Caco-2 (cell line): ENCODE measurements at regions of chr6 and their contacts with region 1.

Region 1: DNA sequence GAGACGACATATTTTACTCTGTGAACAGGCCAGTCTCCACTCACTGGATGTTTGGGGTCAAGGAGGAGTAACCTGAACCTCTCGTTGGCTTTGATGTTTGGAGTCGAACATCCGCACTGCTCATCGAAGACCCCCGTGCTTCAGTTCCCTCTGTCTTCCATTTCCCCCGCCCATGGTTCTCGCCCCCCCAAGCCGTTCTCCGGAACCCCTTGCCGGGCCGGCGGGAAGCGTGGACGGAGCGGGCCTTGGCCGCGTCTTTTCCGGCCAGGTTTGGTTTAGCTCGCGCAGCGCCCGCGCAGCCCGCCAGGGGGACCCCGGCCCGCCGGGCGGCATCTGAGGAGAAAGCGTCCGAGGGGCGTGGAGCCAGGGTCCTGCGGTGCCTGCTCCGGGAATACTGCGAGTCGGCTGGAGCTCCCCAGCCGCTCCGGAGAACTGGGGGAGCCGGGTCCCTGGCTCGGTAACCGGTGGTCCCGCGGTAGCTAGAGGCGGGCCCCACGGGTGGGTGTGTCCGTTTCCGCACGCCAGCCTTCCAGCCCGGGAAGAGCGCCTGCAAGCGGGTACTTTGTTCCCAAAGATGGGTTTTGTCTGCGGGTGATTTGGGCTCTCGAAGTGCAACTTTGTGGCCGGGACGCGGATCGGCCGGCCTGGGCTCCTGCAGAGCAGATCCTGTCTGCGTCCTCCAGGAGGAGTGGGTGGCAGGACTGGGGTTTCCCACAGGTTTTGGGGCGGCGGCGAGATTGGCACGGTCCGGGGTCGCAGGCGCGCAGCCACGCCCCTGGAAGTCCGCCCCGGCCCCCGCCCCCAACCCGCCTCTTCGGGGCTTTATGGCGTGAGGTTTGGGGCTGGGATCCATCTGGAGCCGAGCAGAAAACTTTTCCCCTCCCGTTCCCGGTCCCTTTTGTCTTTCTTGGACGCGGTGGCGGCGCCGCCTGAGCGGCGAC is at the start of gene TMEM200A:
- DNase-seq: peak; percentile 69 to 88
- H3K4me3 ChIP-seq: peak within 1 kb of the TSS; percentile 71
- H3K4me3 Mint-ChIP-seq: peak within 1 kb of the TSS; percentile 91
- H3K27ac Mint-ChIP-seq: peak within 1 kb of the TSS; percentile 20
- H3K4me1 ChIP-seq: peaks cover 16% of the 10 kb centered on the region
- H3K4me1 Mint-ChIP-seq: peaks cover 36% of the 10 kb centered on the region
- H3K27me3 ChIP-seq: no peaks in the 10 kb centered on the region
- H3K27me3 Mint-ChIP-seq: no peaks in the 10 kb centered on the region
- CTCF ChIP-seq: peak; percentile 76 to 92
- total RNA-seq, gene TMEM200A: 15.6 and 16.3 TPM in 2 replicates

Region 2: GRCh38 chr6:130293800-130294199 is 71.6 kb before region 1 on chr6:
- CTCF ChIA-PET with region 1: interaction called, 3 read pairs
- POLR2A ChIA-PET with region 1: no interaction called
- intact Hi-C with region 1: loop called (anchors 5 kb)
- DNase-seq: peak; percentile 73 to 74
- H3K4me3 ChIP-seq: no peak overlapping the region
- H3K4me3 Mint-ChIP-seq: no peak overlapping the region
- H3K27ac Mint-ChIP-seq: peak overlapping the region; percentile 49
- H3K4me1 ChIP-seq: peaks cover 4% of the 10 kb centered on the region; the same call in 1 of the 2 replicates
- H3K4me1 Mint-ChIP-seq: peaks cover 6% of the 10 kb centered on the region
- H3K27me3 ChIP-seq: no peaks in the 10 kb centered on the region
- H3K27me3 Mint-ChIP-seq: no peaks in the 10 kb centered on the region
- CTCF ChIP-seq: peak; percentile 60 to 75

Region 3: DNA sequence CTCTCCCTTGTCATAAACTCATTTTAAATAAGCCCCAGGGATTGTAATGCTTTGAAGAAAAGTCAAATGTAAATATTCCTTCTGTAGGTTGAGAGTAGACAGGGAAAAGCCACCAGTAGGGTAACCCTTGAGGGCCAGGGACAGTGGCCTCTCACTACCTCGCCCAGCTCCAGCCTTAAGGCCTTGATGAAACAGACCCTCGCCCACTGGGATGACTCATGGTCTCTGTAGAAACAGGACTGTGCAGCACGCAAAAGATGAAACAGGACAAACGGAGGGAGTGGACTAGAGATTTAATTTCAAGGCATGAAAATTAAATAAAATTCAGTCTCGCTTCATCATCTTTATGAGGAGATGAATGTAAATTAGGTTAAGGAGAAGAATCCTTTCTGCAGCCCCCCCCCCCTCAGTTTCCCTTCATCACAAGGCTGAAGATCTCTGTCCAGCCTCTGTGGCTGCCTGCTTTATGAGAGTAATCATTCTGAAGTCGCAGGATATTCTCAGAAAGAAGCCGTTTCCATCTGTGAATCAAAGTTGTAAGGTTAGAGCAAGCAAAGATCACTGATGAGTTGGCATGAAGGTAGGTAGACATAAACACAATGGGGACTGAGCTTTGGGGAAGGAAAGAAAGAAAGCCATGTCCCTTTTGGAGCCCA is 60.8 kb after region 1 on chr6:
- CTCF ChIA-PET with region 1: interaction called, 3 read pairs
- POLR2A ChIA-PET with region 1: no interaction called
- intact Hi-C with region 1: loop called (anchors 5 kb)
- DNase-seq: peak; percentile 36 to 43
- H3K4me3 ChIP-seq: no peak overlapping the region
- H3K4me3 Mint-ChIP-seq: no peak overlapping the region
- H3K27ac Mint-ChIP-seq: no peak overlapping the region
- H3K4me1 ChIP-seq: peaks cover 3% of the 10 kb centered on the region
- H3K4me1 Mint-ChIP-seq: peaks cover 22% of the 10 kb centered on the region
- H3K27me3 ChIP-seq: no peaks in the 10 kb centered on the region
- H3K27me3 Mint-ChIP-seq: no peaks in the 10 kb centered on the region
- CTCF ChIP-seq: no peak

Region 4: DNA sequence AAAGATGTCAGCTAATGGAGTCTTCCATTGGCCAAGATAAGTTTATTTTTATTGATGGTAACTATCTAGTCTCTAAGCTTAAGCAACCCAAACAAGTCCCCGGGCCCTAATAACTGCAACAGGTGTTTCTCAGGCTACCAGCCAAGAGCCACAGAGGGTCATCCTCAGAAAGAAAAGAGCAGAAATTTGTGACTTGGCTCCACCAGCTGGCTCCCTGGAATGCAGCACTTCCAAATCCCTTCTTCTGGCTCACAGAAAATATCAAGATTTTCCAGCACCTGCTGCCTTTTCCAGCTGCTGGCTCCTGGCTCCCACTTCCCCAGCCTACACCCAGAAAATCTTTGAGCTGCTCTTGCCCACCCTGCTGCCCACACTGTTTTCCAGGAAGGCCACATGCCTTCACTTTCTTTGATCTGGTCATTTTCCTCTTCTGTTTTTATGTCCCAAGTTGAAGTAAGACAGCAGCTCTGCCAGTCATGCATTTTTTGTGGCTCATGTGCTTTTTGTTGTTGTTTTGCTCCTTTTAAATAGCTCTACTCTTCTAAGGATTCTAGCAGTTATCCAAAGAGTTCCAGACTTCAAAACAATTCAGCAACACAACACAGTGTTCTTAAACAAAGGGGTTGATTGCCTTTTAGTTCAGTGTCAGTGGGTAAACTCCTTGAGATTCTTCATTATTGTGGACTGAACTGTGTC is 310.8 kb after region 1 on chr6:
- CTCF ChIA-PET with region 1: no interaction called
- POLR2A ChIA-PET with region 1: no interaction called
- intact Hi-C with region 1: loop called (anchors 5 kb)
- DNase-seq: peak in 1 of 2 experiments; percentile 14
- H3K4me3 ChIP-seq: no peak overlapping the region
- H3K4me3 Mint-ChIP-seq: no peak overlapping the region
- H3K27ac Mint-ChIP-seq: no peak overlapping the region
- H3K4me1 ChIP-seq: no peaks in the 10 kb centered on the region
- H3K4me1 Mint-ChIP-seq: no peaks in the 10 kb centered on the region
- H3K27me3 ChIP-seq: no peaks in the 10 kb centered on the region
- H3K27me3 Mint-ChIP-seq: peaks cover 2% of the 10 kb centered on the region
- CTCF ChIP-seq: peak in 1 of 2 experiments; percentile 51

Region 5: GRCh38 chr6:130760006-130760405 is 394.6 kb after region 1 on chr6:
- CTCF ChIA-PET with region 1: no interaction called
- POLR2A ChIA-PET with region 1: no interaction called
- intact Hi-C with region 1: loop called (anchors 1 kb)
- DNase-seq: peak in 1 of 2 experiments; percentile 48
- H3K4me3 ChIP-seq: no peak overlapping the region
- H3K4me3 Mint-ChIP-seq: no peak overlapping the region
- H3K27ac Mint-ChIP-seq: no peak overlapping the region
- H3K4me1 ChIP-seq: no peaks in the 10 kb centered on the region
- H3K4me1 Mint-ChIP-seq: no peaks in the 10 kb centered on the region
- H3K27me3 ChIP-seq: no peaks in the 10 kb centered on the region
- H3K27me3 Mint-ChIP-seq: no peaks in the 10 kb centered on the region
- CTCF ChIP-seq: peak; percentile 42 to 68